GM12878 (cell line): ENCODE measurements at regions of chr19 and their contacts with region 1.

Region 1: DNA sequence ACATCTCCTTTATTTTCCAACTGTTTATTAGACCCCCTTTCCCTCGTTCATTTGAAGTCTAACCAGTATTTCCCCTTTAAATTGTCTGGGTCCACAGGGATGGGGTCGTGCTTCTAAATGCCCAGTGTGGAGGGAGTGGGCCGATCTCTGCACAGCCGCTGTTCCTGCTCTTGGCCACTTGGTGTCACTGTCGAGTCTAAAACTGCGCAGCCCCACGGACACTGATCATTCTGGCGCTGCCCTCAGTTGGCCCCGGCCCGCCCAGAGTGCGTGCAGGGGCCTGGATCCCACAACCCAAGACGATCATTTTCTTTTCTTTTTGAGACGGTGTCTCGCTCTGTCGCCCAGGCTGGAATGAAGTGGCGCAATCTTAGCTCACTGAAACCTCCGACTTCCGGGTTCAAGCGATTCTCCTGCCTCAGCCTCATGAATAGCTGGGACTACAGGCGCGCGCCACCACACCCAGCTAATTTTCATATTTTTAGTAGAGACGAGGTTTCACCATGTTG is 12.0 kb downstream of the WDR88 start:
- DNase-seq: no peak
- ATAC-seq: peak; percentile 99
- H3K4me3 ChIP-seq: no peak overlapping the region
- H3K27ac ChIP-seq: no peak overlapping the region
- H3K4me1 ChIP-seq: no peaks in the 10 kb centered on the region
- H3K27me3 ChIP-seq: no peaks in the 10 kb centered on the region
- CTCF ChIP-seq: peak; percentile 91 to 95 (median 94)
- EP300 ChIP-seq: no peak
- POLR2A ChIP-seq: no peak
- RAD21 ChIP-seq: peak; percentile 88

Region 2: GRCh38 chr19:33186431-33187182 is 42.7 kb after region 1 on chr19:
- CTCF ChIA-PET with region 1: interaction called, 41 read pairs
- POLR2A ChIA-PET with region 1: no interaction called
- RAD21 ChIA-PET with region 1: interaction called, 10 read pairs
- SMC1A ChIA-PET with region 1: interaction called, 9 read pairs
- in situ Hi-C with region 1: no loop called
- intact Hi-C with region 1: loop called (anchors 1 kb)
- DNase-seq: no peak
- ATAC-seq: no peak
- H3K4me3 ChIP-seq: no peak overlapping the region
- H3K27ac ChIP-seq: no peak overlapping the region
- H3K4me1 ChIP-seq: no peaks in the 10 kb centered on the region
- H3K27me3 ChIP-seq: peaks cover 0 to 1% of the 10 kb centered on the region in 2 experiments; a peak in 1 of 4 replicates
- CTCF ChIP-seq: no peak
- EP300 ChIP-seq: no peak
- POLR2A ChIP-seq: no peak
- RAD21 ChIP-seq: no peak

Region 3: GRCh38 chr19:33406521-33407139 is 262.7 kb after region 1 on chr19:
- CTCF ChIA-PET with region 1: no interaction called
- POLR2A ChIA-PET with region 1: no interaction called
- RAD21 ChIA-PET with region 1: no interaction called
- SMC1A ChIA-PET with region 1: no interaction called
- in situ Hi-C with region 1: no loop called
- intact Hi-C with region 1: loop called (anchors 5 kb)
- DNase-seq: no peak
- ATAC-seq: peak; percentile 94
- H3K4me3 ChIP-seq: no peak overlapping the region
- H3K27ac ChIP-seq: no peak overlapping the region
- H3K4me1 ChIP-seq: 0 out of 2 replicates have a peak, but pooled peaks cover 4% of the 10 kb centered on the region
- H3K27me3 ChIP-seq: no peaks in the 10 kb centered on the region
- CTCF ChIP-seq: peak; percentile 87 to 92 (median 87)
- EP300 ChIP-seq: no peak
- POLR2A ChIP-seq: no peak
- RAD21 ChIP-seq: peak; percentile 85